Mammary epithelial cell (primary cell): ENCODE measurements at regions of chr12 and their contacts with region 1.

Region 1: DNA sequence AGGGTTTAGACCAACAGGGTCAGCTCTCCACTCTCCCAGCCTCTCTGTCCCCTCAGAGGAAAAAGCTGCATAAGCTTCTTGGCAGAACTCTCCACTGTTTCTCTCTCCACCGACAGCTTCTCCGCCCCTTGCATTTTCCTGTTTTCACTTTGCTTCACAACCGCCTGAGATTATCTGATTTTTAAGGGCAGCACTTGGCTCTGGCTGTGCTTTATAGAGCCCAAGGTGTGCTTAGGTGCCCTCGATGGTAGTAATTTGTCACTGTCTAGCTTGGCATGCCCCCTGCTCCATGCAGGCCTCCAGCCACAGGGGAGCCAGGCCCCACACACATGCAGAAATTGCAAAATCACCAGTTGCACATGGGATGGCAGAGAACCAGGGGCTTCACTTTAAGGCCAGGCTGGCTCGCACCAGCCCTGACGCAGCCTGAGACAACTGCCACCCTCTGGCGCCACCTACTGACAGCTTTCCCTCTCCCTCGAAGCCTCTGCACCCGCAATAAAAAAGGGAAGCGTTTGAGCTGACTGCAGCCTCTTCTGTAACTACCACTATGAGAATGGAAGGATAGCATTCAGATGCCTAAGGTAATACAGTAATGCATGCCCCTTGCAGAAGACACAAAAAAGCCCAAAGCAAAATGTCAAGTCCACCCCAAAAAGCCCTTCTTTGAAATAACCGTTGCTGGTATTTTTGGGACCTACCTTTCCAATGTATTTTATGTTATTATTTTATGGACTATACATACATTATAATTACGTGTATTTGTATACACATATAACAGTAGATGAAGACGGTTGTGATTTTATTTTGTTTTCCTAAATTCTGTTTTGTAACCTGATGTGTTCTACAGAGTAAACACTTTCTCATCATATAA is 32.0 kb upstream of the RIMBP2 start:
- DNase-seq: peak; percentile 35
- H3K4me3 ChIP-seq: no peak overlapping the region
- H3K27ac ChIP-seq: no peak overlapping the region
- H3K4me1 ChIP-seq: no peaks in the 10 kb centered on the region
- H3K27me3 ChIP-seq: no peaks in the 10 kb centered on the region
- CTCF ChIP-seq: peak; percentile 84 to 85

Region 2: GRCh38 chr12:130031571-130032189 is 716.4 kb before region 1 on chr12:
- CTCF ChIA-PET with region 1: interaction called, 4 read pairs
- dilution Hi-C with region 1: no loop called
- in situ Hi-C with region 1: loop called in 1 of 2 experiments (anchors 25 kb)
- intact Hi-C with region 1: loop called (anchors 5 kb)
- DNase-seq: no peak
- H3K4me3 ChIP-seq: no peak overlapping the region
- H3K27ac ChIP-seq: no peak overlapping the region
- H3K4me1 ChIP-seq: no peaks in the 10 kb centered on the region
- H3K27me3 ChIP-seq: no peaks in the 10 kb centered on the region
- CTCF ChIP-seq: peak; percentile 57 to 64

Region 3: GRCh38 chr12:130044991-130045621 is 703.0 kb before region 1 on chr12:
- CTCF ChIA-PET with region 1: no interaction called
- dilution Hi-C with region 1: no loop called
- in situ Hi-C with region 1: loop called in 1 of 2 experiments (anchors 25 kb)
- intact Hi-C with region 1: loop called (anchors 5 kb)
- DNase-seq: no peak
- H3K4me3 ChIP-seq: no peak overlapping the region
- H3K27ac ChIP-seq: no peak overlapping the region
- H3K4me1 ChIP-seq: no peaks in the 10 kb centered on the region
- H3K27me3 ChIP-seq: no peaks in the 10 kb centered on the region
- CTCF ChIP-seq: no peak

Region 4: DNA sequence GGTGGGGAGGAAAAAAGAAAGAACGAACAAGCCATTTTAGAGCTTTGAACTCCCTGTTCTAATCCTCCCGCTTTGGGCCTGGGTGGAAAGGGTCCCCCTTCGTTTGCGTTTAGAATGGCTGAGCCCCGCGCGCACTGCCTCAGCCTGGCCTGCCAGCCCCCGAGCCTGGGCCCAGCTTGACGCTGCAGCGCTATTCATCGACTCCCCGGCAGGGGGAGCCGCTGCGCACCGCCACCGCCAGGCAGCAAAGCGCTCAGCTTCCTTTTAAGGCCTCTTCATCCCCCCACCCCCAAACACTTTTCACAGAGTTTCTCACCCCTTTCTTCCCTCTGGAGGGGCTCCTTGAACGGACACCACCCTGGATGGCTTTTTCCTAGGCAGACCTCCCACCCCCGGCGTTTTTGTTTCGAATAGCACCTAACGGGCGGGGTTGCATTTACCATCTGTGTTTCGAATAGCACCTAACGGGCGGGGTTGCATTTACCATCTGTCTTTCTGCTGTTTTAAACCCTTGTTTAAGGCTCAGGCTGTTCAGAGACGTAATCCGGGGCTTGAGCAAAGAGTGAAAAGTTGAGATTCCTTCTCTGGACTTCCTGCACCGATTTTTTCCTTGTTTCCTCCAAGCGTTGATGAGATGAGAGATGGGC is 466.8 kb before region 1 on chr12:
- CTCF ChIA-PET with region 1: interaction called, 5 read pairs
- dilution Hi-C with region 1: no loop called
- in situ Hi-C with region 1: no loop called
- intact Hi-C with region 1: loop called (anchors 5 kb)
- DNase-seq: no peak
- H3K4me3 ChIP-seq: no peak overlapping the region
- H3K27ac ChIP-seq: no peak overlapping the region
- H3K4me1 ChIP-seq: no peaks in the 10 kb centered on the region
- H3K27me3 ChIP-seq: no peaks in the 10 kb centered on the region
- CTCF ChIP-seq: peak; percentile 21 to 52

Region 5: GRCh38 chr12:130335517-130336392 is 412.3 kb before region 1 on chr12:
- CTCF ChIA-PET with region 1: no interaction called
- dilution Hi-C with region 1: no loop called
- in situ Hi-C with region 1: no loop called
- intact Hi-C with region 1: loop called (anchors 5 kb)
- DNase-seq: peak; percentile 16
- H3K4me3 ChIP-seq: no peak overlapping the region
- H3K27ac ChIP-seq: no peak overlapping the region
- H3K4me1 ChIP-seq: no peaks in the 10 kb centered on the region
- H3K27me3 ChIP-seq: no peaks in the 10 kb centered on the region
- CTCF ChIP-seq: peak; percentile 48 to 61